Caco-2 (cell line): ENCODE measurements at regions of chr3 and their contacts with region 1.

Region 1: GRCh38 chr3:122101646-122102045 is 46.5 kb downstream of the CD86 start:
- DNase-seq: peak in 1 of 2 experiments; percentile 46
- H3K4me3 ChIP-seq: no peak overlapping the region
- H3K4me3 Mint-ChIP-seq: no peak overlapping the region
- H3K27ac Mint-ChIP-seq: no peak overlapping the region
- H3K4me1 ChIP-seq: peaks cover 21% of the 10 kb centered on the region
- H3K4me1 Mint-ChIP-seq: no peaks in the 10 kb centered on the region
- H3K27me3 ChIP-seq: no peaks in the 10 kb centered on the region
- H3K27me3 Mint-ChIP-seq: no peaks in the 10 kb centered on the region
- CTCF ChIP-seq: peak; percentile 16 to 44

Region 2: GRCh38 chr3:122003112-122003511 is 98.5 kb before region 1 on chr3:
- CTCF ChIA-PET with region 1: no interaction called
- POLR2A ChIA-PET with region 1: no interaction called
- intact Hi-C with region 1: no loop called
- DNase-seq: no peak
- H3K4me3 ChIP-seq: no peak overlapping the region
- H3K4me3 Mint-ChIP-seq: no peak overlapping the region
- H3K27ac Mint-ChIP-seq: no peak overlapping the region
- H3K4me1 ChIP-seq: peaks cover 24% of the 10 kb centered on the region
- H3K4me1 Mint-ChIP-seq: peaks cover 22% of the 10 kb centered on the region
- H3K27me3 ChIP-seq: no peaks in the 10 kb centered on the region
- H3K27me3 Mint-ChIP-seq: no peaks in the 10 kb centered on the region
- CTCF ChIP-seq: no peak

Region 3: GRCh38 chr3:122067214-122067550 is 34.5 kb before region 1 on chr3:
- CTCF ChIA-PET with region 1: no interaction called
- POLR2A ChIA-PET with region 1: no interaction called
- intact Hi-C with region 1: no loop called
- DNase-seq: no peak
- H3K4me3 ChIP-seq: no peak overlapping the region
- H3K4me3 Mint-ChIP-seq: no peak overlapping the region
- H3K27ac Mint-ChIP-seq: no peak overlapping the region
- H3K4me1 ChIP-seq: no peaks in the 10 kb centered on the region
- H3K4me1 Mint-ChIP-seq: no peaks in the 10 kb centered on the region
- H3K27me3 ChIP-seq: no peaks in the 10 kb centered on the region
- H3K27me3 Mint-ChIP-seq: peaks cover 11% of the 10 kb centered on the region
- CTCF ChIP-seq: no peak

Region 4: DNA sequence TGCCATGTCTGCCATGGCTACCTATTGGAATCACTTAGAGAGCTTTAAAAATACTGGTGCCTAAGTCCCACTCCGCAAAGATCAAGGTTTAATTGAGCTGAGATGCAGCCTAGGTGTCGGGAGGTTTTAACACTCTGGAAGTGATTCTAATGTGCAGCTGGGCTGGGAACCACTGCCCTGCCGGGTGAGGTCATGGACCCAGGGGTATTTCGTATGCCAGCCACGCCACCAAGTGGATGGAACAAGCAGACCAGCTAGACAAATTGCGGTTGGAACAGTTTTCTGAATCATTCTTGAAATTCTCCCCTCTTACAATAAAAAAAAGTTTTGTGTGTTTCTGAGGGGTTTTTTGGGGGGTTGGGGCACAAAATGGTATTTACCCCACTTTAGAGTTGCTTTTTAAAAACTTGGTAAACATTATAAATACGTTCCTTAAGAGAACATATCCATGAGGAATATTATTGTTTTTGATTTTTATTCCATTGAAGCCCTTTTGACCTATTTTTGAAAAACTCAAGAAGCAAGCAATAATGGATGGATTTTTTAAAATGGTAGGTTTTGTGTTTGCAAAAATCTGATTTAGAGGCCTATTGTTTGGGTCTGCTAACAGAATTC is 157.2 kb after region 1 on chr3:
- CTCF ChIA-PET with region 1: interaction called, 4 read pairs
- POLR2A ChIA-PET with region 1: no interaction called
- intact Hi-C with region 1: loop called (anchors 1 kb)
- DNase-seq: peak; percentile 68 to 69
- H3K4me3 ChIP-seq: no peak overlapping the region
- H3K4me3 Mint-ChIP-seq: no peak overlapping the region
- H3K27ac Mint-ChIP-seq: no peak overlapping the region
- H3K4me1 ChIP-seq: no peaks in the 10 kb centered on the region
- H3K4me1 Mint-ChIP-seq: no peaks in the 10 kb centered on the region
- H3K27me3 ChIP-seq: peaks cover 1% of the 10 kb centered on the region; the same call in 1 of the 2 replicates
- H3K27me3 Mint-ChIP-seq: peaks cover 15% of the 10 kb centered on the region
- CTCF ChIP-seq: peak; percentile 47 to 76

Region 5: GRCh38 chr3:122299872-122300460 is 198.3 kb after region 1 on chr3:
- CTCF ChIA-PET with region 1: no interaction called
- POLR2A ChIA-PET with region 1: no interaction called
- intact Hi-C with region 1: loop called (anchors 5 kb)
- DNase-seq: peak in 1 of 2 experiments; percentile 34
- H3K4me3 ChIP-seq: no peak overlapping the region
- H3K4me3 Mint-ChIP-seq: no peak overlapping the region
- H3K27ac Mint-ChIP-seq: no peak overlapping the region
- H3K4me1 ChIP-seq: no peaks in the 10 kb centered on the region
- H3K4me1 Mint-ChIP-seq: no peaks in the 10 kb centered on the region
- H3K27me3 ChIP-seq: no peaks in the 10 kb centered on the region
- H3K27me3 Mint-ChIP-seq: no peaks in the 10 kb centered on the region
- CTCF ChIP-seq: peak; percentile 51 to 58

Region 6: DNA sequence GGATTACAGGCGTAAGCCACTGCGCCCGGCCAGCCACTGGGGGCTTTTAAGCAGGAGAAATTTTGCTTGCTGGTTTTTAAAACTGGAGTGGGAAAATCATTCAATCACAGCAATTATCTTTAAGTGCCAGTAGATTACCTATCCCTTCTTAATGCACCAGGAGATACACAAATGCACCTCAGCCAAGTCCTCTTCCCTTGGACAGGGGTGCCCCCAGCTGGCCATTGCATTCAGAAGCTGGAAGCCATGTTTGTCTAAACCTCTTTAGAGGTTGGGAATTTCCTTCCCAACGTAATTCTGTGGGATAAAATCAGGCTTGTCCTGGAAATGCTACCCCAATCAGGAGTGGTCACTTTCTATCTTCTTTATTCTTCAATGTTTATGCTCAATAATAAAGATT is 254.8 kb after region 1 on chr3:
- CTCF ChIA-PET with region 1: no interaction called
- POLR2A ChIA-PET with region 1: no interaction called
- intact Hi-C with region 1: loop called (anchors 5 kb)
- DNase-seq: peak; percentile 50 to 56
- H3K4me3 ChIP-seq: no peak overlapping the region
- H3K4me3 Mint-ChIP-seq: no peak overlapping the region
- H3K27ac Mint-ChIP-seq: no peak overlapping the region
- H3K4me1 ChIP-seq: 0 out of 2 replicates have a peak, but pooled peaks cover under 1% of the 10 kb centered on the region
- H3K4me1 Mint-ChIP-seq: no peaks in the 10 kb centered on the region
- H3K27me3 ChIP-seq: no peaks in the 10 kb centered on the region
- H3K27me3 Mint-ChIP-seq: no peaks in the 10 kb centered on the region
- CTCF ChIP-seq: peak; percentile 31 to 52